CD4-positive, alpha-beta T cell (primary cell): ENCODE measurements at regions of chr20 and their contacts with region 1.

Region 1: GRCh38 chr20:23937303-23938117 is 51.1 kb downstream of the GGTLC1 start:
- DNase-seq: peak; percentile 51 to 84 (median 61)
- ATAC-seq: peak; percentile 99
- H3K4me3 ChIP-seq: no peak overlapping the region
- H3K4me3 Mint-ChIP-seq: no peak overlapping the region
- H3K27ac ChIP-seq: no peak overlapping the region
- H3K27ac Mint-ChIP-seq: no peak overlapping the region
- H3K4me1 ChIP-seq: no peaks in the 10 kb centered on the region
- H3K4me1 Mint-ChIP-seq: no peaks in the 10 kb centered on the region
- H3K27me3 ChIP-seq: no peaks in the 10 kb centered on the region
- H3K27me3 Mint-ChIP-seq: no peaks in the 10 kb centered on the region
- CTCF ChIP-seq: peak; percentile 74

Region 2: DNA sequence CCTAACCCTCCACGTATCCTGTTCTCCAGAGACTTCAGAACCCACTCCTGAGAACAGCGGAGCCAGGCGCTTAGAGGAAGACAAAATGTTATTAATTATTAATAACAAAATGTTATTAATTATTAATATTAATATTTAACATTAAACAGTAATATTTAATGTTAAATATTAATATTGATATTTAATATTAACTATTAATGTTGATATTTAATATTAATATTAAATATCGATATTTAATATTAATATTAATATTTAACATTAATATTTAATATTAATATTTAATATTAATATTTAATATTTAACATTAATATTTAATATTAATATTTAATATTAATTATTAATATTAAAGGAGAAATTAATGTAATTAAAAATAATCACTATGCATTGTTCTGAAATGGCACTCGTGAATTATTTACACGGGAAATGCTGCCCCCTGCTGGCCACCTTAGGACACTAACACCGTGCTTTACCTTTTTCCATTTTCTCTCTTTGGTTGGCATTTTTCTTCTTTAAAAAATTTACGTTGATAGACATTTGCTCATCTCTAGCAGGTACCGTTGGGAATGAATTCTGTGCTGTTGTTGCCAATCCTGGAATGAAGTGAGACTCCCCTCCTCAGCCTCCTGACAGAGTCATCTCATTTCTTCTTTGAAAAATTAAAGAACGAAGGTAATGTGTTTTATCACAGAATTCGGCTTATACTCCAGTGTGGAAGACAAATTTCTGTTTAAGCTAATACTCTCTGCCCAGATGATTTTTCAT is 58.6 kb after region 1 on chr20:
- CTCF ChIA-PET with region 1: no interaction called
- POLR2A ChIA-PET with region 1: no interaction called
- intact Hi-C with region 1: loop called in 1 of 2 experiments (anchors 2 kb)
- DNase-seq: peak; percentile 34 to 78 (median 62)
- ATAC-seq: peak; percentile 68
- H3K4me3 ChIP-seq: no peak overlapping the region
- H3K4me3 Mint-ChIP-seq: no peak overlapping the region
- H3K27ac ChIP-seq: no peak overlapping the region
- H3K27ac Mint-ChIP-seq: no peak overlapping the region
- H3K4me1 ChIP-seq: no peaks in the 10 kb centered on the region
- H3K4me1 Mint-ChIP-seq: no peaks in the 10 kb centered on the region
- H3K27me3 ChIP-seq: peaks cover 0 to 3% of the 10 kb centered on the region in 2 experiments
- H3K27me3 Mint-ChIP-seq: no peaks in the 10 kb centered on the region
- CTCF ChIP-seq: peak; percentile 75

Region 3: GRCh38 chr20:24160563-24161375 is 223.3 kb after region 1 on chr20:
- CTCF ChIA-PET with region 1: interaction called, 3 read pairs
- POLR2A ChIA-PET with region 1: no interaction called
- intact Hi-C with region 1: loop called (anchors 1 kb)
- DNase-seq: peak in 3 of 14 experiments; percentile 16 to 34 (median 32)
- ATAC-seq: no peak
- H3K4me3 ChIP-seq: no peak overlapping the region
- H3K4me3 Mint-ChIP-seq: no peak overlapping the region
- H3K27ac ChIP-seq: no peak overlapping the region
- H3K27ac Mint-ChIP-seq: no peak overlapping the region
- H3K4me1 ChIP-seq: no peaks in the 10 kb centered on the region
- H3K4me1 Mint-ChIP-seq: no peaks in the 10 kb centered on the region
- H3K27me3 ChIP-seq: peaks cover 0 to 6% of the 10 kb centered on the region in 2 experiments
- H3K27me3 Mint-ChIP-seq: no peaks in the 10 kb centered on the region
- CTCF ChIP-seq: peak; percentile 49

Region 4: DNA sequence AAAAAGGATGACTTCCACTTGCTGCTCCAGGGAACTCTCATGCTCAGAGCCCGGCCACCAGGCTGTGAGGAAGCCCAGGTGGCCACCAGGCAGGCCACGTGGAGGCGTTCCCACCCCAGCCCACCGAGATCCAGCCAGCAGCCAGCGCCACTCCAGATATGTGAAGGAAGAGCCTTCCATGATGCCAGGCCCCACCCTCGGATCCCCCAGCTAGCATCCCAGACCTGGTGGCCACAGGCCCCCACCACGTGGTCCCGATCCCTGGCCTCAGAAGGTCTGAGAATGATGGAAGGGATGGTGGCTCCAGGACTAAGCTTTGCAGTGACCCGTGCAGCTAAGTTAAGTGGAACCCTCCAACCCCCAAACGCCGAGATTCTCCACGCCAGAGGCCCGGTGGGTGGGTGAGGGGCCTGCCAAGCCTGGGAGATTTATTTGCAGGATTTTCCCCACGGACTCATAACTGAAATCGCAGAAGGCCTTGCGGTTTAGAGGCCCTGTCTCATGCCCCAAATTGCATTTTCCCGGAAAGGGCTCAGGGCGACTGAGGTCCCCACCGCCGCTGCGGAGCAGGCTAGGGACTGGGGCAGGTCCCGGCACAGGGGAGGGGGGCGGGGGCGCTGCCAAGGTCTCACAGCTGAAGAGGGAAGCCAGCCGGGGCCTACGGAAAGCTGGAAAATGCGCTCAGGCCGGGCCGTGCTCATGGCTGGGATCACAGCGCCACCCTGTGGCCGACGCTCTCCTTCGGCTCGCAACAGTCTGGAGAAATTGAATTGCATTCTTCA is 980.5 kb after region 1 on chr20:
- CTCF ChIA-PET with region 1: interaction called, 3 read pairs
- POLR2A ChIA-PET with region 1: no interaction called
- intact Hi-C with region 1: loop called in 1 of 2 experiments (anchors 1 kb)
- DNase-seq: peak in 11 of 14 experiments; percentile 13 to 78 (median 28)
- ATAC-seq: peak; percentile 34
- H3K4me3 ChIP-seq: peak overlapping the region; percentile 33
- H3K4me3 Mint-ChIP-seq: no peak overlapping the region
- H3K27ac ChIP-seq: no peak overlapping the region
- H3K27ac Mint-ChIP-seq: no peak overlapping the region
- H3K4me1 ChIP-seq: peaks cover 11% of the 10 kb centered on the region
- H3K4me1 Mint-ChIP-seq: no peaks in the 10 kb centered on the region
- H3K27me3 ChIP-seq: no peaks in the 10 kb centered on the region
- H3K27me3 Mint-ChIP-seq: peaks cover 8% of the 10 kb centered on the region
- CTCF ChIP-seq: peak; percentile 62

Region 5: DNA sequence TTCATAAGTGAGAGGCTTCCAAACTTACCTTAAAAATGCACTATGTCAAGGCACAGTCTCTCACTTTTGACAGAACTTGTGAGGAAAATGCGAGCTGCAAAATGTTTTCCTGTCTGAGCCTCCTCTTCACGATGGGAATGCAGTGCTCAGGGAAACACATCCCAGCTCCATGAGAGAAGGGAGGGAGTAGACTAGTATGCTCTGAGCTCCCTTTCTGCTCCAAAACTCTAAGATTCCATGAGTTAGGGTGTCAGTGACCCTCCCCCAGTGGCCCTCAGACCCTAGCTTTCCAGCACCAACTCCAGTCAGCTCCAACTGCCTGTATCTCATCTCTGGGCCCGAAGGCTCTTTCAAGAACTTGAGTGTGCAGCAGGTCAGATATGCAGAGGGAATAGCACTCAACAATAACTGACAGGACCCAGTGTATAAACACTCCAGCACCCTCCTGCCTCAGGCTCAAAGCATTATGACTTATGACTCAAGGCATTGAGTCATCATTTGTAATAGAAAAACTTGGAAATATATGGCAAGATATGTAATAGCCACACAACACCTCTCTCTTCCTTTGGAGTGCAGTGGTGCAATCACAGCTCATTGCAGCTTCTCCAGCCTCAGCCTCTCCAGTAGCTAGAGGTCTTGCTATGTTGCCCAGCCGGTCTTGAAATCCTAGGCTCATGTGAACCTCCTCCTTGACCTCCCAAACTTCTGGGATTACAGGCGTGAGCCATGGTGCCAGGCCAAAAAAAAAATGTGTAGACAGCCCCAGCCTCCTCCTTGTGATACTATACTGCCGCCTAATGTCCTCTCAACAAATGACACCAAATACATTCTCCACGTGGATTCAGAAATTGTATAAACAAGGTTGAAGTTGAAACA is 1241.3 kb after region 1 on chr20:
- CTCF ChIA-PET with region 1: no interaction called
- POLR2A ChIA-PET with region 1: no interaction called
- intact Hi-C with region 1: loop called in 1 of 2 experiments (anchors 5 kb)
- DNase-seq: peak in 4 of 14 experiments; percentile 24 to 64 (median 61)
- ATAC-seq: peak; percentile 76
- H3K4me3 ChIP-seq: no peak overlapping the region
- H3K4me3 Mint-ChIP-seq: no peak overlapping the region
- H3K27ac ChIP-seq: no peak overlapping the region
- H3K27ac Mint-ChIP-seq: no peak overlapping the region
- H3K4me1 ChIP-seq: no peaks in the 10 kb centered on the region
- H3K4me1 Mint-ChIP-seq: no peaks in the 10 kb centered on the region
- H3K27me3 ChIP-seq: no peaks in the 10 kb centered on the region
- H3K27me3 Mint-ChIP-seq: peaks cover 18% of the 10 kb centered on the region
- CTCF ChIP-seq: peak; percentile 75